ENCODE measurements at regions of chrX and their contacts with region 1.

Region 1: DNA sequence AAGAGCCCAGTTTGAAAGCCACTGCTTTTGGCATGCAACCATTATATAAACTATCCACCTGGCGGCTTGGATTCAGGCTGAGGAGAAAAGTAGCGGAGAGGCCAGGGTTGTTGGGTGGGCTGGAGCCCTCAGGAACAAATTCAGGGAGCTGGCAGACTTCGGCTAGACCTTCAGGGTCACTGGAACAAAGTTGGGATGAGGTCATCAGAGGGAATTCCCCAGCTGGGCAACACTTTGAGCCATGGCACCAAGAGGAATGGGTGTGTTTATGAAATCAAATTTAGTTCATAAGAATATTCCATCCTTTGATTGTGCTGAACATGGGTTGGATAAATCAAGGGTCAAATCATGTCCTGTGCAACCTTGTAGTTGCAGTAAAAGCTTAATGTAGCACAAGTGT is 22.0 kb downstream of the MTMR1 start:
- DNase-seq: no peak
- ATAC-seq: peak; percentile 29

Region 2: GRCh38 chrX:149962859-149963757 is 752.1 kb before region 1 on chrX:
- intact Hi-C with region 1: loop called in 1 of 2 experiments (anchors 5 kb)
- DNase-seq: peak; percentile 34 to 41
- ATAC-seq: peak; percentile 95

Region 3: DNA sequence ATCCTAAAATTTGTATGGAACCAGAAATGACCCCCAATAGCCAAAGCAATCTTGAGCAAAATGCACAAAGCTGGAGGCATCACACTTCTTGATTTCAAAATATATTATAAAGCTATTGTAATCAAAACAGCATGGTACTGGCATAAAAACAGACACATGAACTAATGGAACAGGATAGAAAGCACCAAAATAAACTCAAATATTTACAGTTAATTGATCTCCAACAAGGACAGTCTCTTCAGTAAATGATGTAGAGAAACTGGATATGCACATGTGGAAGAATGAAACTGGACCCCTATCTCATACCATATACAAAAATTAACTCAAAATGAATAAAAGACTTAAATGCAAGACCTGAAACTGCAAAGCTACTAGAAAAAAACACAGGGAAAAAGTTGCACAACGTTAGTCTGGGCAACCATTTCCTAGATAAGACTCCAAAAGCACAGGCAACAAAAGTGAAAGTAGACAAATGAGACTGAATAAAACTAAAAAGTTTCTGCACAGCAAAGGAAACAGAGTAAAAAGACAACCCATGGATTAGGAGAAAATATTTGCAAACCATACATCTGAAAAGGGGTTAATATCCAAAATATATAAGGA is 118.4 kb after region 1 on chrX:
- intact Hi-C with region 1: no loop called
- DNase-seq: no peak
- ATAC-seq: no peak

Region 4: GRCh38 chrX:151336809-151337208 is 621.6 kb after region 1 on chrX:
- intact Hi-C with region 1: no loop called
- DNase-seq: no peak
- ATAC-seq: no peak